OCI-LY7 (cell line): ENCODE measurements at regions of chr11 and their contacts with region 1.

Region 1: DNA sequence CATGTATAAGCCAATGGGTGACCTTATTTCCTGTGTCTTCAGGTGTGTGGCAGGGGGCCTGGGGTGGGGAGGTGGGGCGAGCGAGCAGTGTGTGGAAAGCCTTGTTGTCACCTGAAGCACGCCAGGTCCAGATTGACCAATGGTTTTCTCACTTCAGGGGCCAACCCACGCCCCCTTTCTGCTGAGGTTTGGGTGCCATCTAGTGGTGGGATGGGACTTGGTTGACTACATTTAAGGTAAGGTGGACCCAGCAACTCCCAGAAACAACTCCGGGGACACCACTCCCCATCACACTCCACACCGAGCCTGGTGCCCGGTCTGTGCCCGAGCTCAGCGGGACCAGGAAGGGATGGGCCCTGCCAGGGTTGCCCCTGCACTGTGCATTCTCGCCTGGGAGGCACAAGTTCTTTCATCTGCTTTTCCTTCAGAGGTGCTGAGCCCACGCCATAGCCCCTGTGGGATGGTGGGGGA is 40.0 kb downstream of the TPCN2 start:
- DNase-seq: peak; percentile 78
- H3K4me3 ChIP-seq: no peak overlapping the region
- H3K27ac ChIP-seq: no peak overlapping the region
- H3K4me1 ChIP-seq: no peaks in the 10 kb centered on the region
- CTCF ChIP-seq: peak; percentile 85

Region 2: GRCh38 chr11:68632802-68633201 is 455.9 kb before region 1 on chr11:
- CTCF ChIA-PET with region 1: no interaction called
- POLR2A ChIA-PET with region 1: no interaction called
- intact Hi-C with region 1: loop called (anchors 5 kb)
- DNase-seq: peak; percentile 79
- H3K4me3 ChIP-seq: no peak overlapping the region
- H3K27ac ChIP-seq: no peak overlapping the region
- H3K4me1 ChIP-seq: no peaks in the 10 kb centered on the region
- CTCF ChIP-seq: peak; percentile 92

Region 3: DNA sequence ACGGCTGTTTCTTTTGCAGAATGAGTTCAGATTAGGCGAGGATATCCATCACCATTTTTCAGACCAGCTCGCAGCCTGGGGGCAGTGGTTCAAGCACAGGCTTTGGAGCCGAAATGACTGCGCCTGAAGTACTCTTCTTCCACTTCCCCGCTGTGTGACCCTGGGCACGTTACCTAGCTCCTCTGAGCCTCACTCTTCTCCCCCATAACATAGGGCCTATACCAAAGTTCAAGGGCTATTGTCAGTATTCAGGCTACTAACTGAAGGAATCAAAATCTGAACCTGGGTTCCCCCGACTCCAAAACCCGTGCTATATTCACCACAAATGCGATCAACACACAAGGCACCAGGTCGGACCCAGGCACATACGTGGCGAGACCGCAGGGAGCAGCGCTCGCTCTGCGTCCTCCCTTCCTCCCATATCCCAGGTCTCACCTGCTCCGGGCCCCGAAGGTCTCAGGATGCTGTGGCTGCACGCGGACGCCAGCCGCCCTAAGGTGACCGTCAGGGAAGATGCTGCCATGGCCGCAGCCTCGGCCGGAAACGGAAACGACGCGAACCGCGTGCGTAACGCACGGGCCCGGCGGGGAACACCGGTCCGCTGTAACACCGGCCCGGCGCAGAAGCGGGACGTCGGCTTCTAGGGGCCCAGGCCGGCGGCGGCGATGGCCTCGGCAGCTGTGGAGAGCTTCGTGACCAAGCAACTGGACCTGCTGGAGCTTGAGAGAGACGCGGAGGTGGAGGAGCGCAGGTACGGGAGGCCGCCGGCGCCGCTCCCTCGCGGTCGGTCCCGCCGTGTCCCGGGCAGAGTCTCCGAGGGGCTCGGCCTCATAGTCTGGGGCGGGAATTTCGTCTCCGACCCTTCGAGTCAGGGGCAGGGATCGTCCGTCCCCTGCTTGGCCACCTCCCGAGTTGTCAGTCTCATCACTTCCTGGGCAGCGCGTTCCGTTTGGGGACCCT is 185.1 kb before region 1 on chr11 and contains the starts of genes IGHMBP2 and MRPL21:
- CTCF ChIA-PET with region 1: no interaction called
- POLR2A ChIA-PET with region 1: no interaction called
- intact Hi-C with region 1: loop called (anchors 2 kb)
- DNase-seq: peak; percentile 88
- H3K4me3 ChIP-seq: peak within 1 kb of the TSS; percentile 99
- H3K27ac ChIP-seq: peak within 1 kb of the TSS; percentile 50
- H3K4me1 ChIP-seq: peaks cover 25% of the 10 kb centered on the region
- CTCF ChIP-seq: no peak
- total RNA-seq, gene IGHMBP2: 17.5 and 27.3 TPM in 2 replicates
- total RNA-seq, gene MRPL21: 48.3 and 75.0 TPM in 2 replicates

Region 4: DNA sequence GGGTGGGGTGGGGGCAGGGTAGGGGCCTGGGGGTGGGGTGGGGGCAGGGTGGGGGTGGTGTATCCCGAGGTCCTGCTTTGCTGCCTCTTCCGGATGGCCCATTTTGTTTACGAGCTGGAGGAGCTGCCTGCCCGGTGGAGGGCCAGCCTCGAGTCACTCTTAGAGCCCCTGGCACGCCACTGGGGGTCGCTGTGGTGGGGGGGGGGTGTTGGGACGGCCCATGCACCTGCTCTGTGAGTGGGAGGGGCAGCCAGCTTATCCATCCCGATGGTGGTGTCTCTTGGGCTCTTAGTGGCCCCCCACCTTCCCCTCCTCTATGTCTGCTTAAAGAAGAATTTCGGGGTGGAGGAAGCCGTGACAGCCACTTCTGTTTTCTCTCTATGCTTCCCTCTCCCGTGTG is 132.6 kb before region 1 on chr11:
- CTCF ChIA-PET with region 1: no interaction called
- POLR2A ChIA-PET with region 1: no interaction called
- intact Hi-C with region 1: loop called (anchors 2 kb)
- DNase-seq: peak; percentile 40
- H3K4me3 ChIP-seq: no peak overlapping the region
- H3K27ac ChIP-seq: no peak overlapping the region
- H3K4me1 ChIP-seq: no peaks in the 10 kb centered on the region
- CTCF ChIP-seq: peak; percentile 67

Region 5: DNA sequence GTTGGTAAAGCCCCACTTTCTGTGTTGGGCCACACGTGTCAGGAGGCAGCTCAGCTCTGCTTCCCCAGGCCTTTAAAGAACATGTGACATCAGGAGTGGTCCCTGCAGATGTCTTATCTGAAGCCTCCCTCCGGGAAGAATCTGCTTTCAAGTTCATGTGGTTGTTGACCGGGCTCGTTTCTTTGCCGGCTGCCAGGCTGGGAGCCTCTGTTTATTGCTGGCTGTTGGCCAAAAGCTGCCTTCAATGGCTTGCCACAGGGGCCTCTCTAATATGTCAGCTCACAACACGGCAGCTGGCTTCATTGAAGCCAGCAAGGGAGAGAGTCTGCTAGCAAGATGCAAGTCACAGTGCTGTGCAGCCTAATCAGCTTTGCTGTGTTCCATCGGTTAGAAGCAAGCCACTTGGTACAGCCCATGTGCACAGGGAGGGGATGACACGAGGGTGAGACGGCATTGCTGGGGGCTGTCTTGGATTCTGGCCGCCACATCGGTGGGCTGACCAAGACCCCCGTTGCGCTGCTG is 90.3 kb before region 1 on chr11:
- CTCF ChIA-PET with region 1: no interaction called
- POLR2A ChIA-PET with region 1: no interaction called
- intact Hi-C with region 1: no loop called
- DNase-seq: no peak
- H3K4me3 ChIP-seq: no peak overlapping the region
- H3K27ac ChIP-seq: no peak overlapping the region
- H3K4me1 ChIP-seq: no peaks in the 10 kb centered on the region
- CTCF ChIP-seq: no peak

Region 6: GRCh38 chr11:69055598-69056516 is 32.9 kb before region 1 on chr11:
- CTCF ChIA-PET with region 1: no interaction called
- POLR2A ChIA-PET with region 1: interaction called, 3 read pairs
- intact Hi-C with region 1: loop called (anchors 1 kb)
- DNase-seq: peak; percentile 88
- H3K4me3 ChIP-seq: peak overlapping the region; percentile 47
- H3K27ac ChIP-seq: peak overlapping the region; percentile 96
- H3K4me1 ChIP-seq: peaks cover 66% of the 10 kb centered on the region
- CTCF ChIP-seq: no peak